Esophagus muscularis mucosa (tissue), 4 donors: ENCODE measurements at regions of chr13 and their contacts with region 1.

Region 1: GRCh38 chr13:27424246-27425157 is at the start of gene GTF3A:
- DNase-seq: no peak
- H3K4me3 ChIP-seq: peak within 1 kb of the TSS; percentile 71 to 96 (median 87)
- H3K27ac ChIP-seq: peak within 1 kb of the TSS; percentile 85 to 94 (median 90)
- H3K4me1 ChIP-seq: peaks cover 30 to 47% (median 42%) of the 10 kb centered on the region in 4 donors
- H3K27me3 ChIP-seq: no peaks in the 10 kb centered on the region
- CTCF ChIP-seq: peak in 1 of 3 experiments; percentile 14
- EP300 ChIP-seq: no peak
- POLR2A ChIP-seq: peak; percentile 31
- total RNA-seq, gene GTF3A: 129 to 197 (median 140) TPM

Region 2: DNA sequence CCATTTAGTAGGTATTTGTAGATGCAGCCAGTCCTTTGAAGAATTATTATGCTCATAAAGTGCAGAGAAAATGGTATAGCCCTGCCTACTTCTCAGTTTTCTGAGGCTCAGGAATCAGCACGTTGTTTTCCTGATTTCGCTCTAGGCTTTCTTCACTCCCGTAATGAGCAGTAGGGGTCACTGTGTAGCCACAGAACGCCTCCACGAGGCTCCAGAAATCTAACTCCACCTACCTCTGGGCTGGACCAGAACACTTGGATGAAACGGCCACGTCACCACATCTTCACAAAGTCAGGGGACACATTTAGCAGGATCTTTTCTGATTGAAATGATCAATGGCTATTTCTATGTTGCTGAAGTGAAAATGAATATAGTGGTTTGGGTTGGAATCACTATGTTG is 49.9 kb before region 1 on chr13:
- intact Hi-C with region 1: loop called (anchors 5 kb)
- DNase-seq: no peak
- H3K4me3 ChIP-seq: no peak overlapping the region
- H3K27ac ChIP-seq: no peak overlapping the region
- H3K4me1 ChIP-seq: peaks cover 0 to 16% (median 7%) of the 10 kb centered on the region in 4 donors
- H3K27me3 ChIP-seq: peaks cover 0 to 34% (median 0%) of the 10 kb centered on the region in 4 donors
- CTCF ChIP-seq: peak; percentile 73 to 77 (median 76)
- EP300 ChIP-seq: no peak
- POLR2A ChIP-seq: no peak